Spleen (tissue), 13 donors: ENCODE measurements at regions of chr3 and their contacts with region 1.

Region 1: DNA sequence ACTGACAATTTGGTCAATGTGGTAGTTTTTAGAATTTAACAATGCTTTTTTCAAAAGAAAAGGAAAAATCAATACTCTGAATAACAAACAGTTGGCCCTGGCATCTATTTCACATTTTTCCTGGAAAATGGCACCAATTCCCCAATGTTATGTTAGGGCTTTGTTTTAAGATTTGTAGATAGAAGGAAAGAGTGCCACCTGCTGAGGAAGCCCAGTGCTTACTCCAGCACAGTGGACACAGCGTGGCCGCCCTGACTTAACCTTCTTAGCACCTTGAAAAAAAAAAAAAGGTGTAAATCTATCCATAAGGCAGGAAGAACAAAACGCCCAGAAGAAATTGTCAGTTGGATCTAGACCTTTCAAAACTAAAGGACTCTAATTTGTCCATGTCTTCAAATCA is 110.7 kb upstream of the CNTN4 start:
- DNase-seq: no peak
- H3K4me3 ChIP-seq: no peak overlapping the region
- H3K27ac ChIP-seq: no peak overlapping the region
- H3K4me1 ChIP-seq: no peaks in the 10 kb centered on the region
- H3K27me3 ChIP-seq: no peaks in the 10 kb centered on the region
- CTCF ChIP-seq: peak in 4 of 11 experiments; percentile 14 to 30 (median 17)
- POLR2A ChIP-seq: no peak

Region 2: GRCh38 chr3:1082108-1082507 is 905.9 kb before region 1 on chr3:
- intact Hi-C with region 1: loop called (anchors 10 kb)
- DNase-seq: no peak
- H3K4me3 ChIP-seq: no peak overlapping the region
- H3K27ac ChIP-seq: no peak overlapping the region
- H3K4me1 ChIP-seq: no peaks in the 10 kb centered on the region
- H3K27me3 ChIP-seq: no peaks in the 10 kb centered on the region
- CTCF ChIP-seq: peak in 8 of 11 experiments; percentile 18 to 50 (median 45)
- POLR2A ChIP-seq: no peak

Region 3: DNA sequence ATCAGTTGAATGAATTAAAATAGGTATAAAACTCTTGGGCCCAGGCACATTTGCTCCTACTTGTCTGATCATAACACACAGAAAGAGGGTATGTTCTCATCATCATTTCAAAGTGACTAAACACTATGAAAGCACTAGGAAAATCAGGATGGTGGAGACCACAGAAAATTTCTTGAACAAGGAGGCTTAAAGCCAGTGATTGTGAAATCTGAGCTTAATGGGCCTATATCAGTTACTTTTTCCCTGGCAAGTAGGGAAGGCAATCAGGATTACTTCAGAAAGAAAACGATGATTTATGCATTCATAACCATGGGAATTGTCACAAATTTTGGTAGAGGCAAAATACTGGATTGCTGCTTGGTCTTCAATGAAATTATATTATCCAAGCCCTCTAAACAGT is 323.7 kb before region 1 on chr3:
- intact Hi-C with region 1: no loop called
- DNase-seq: no peak
- H3K4me3 ChIP-seq: no peak overlapping the region
- H3K27ac ChIP-seq: no peak overlapping the region
- H3K4me1 ChIP-seq: no peaks in the 10 kb centered on the region
- H3K27me3 ChIP-seq: no peaks in the 10 kb centered on the region
- CTCF ChIP-seq: no peak
- POLR2A ChIP-seq: no peak

Region 4: GRCh38 chr3:1726741-1727140 is 261.2 kb before region 1 on chr3:
- intact Hi-C with region 1: no loop called
- DNase-seq: no peak
- H3K4me3 ChIP-seq: no peak overlapping the region
- H3K27ac ChIP-seq: no peak overlapping the region
- H3K4me1 ChIP-seq: no peaks in the 10 kb centered on the region
- H3K27me3 ChIP-seq: no peaks in the 10 kb centered on the region
- CTCF ChIP-seq: no peak
- POLR2A ChIP-seq: no peak

Region 5: GRCh38 chr3:1908651-1909445 is 79.1 kb before region 1 on chr3:
- intact Hi-C with region 1: no loop called
- DNase-seq: no peak
- H3K4me3 ChIP-seq: no peak overlapping the region
- H3K27ac ChIP-seq: no peak overlapping the region
- H3K4me1 ChIP-seq: no peaks in the 10 kb centered on the region
- H3K27me3 ChIP-seq: no peaks in the 10 kb centered on the region
- CTCF ChIP-seq: no peak
- POLR2A ChIP-seq: no peak

Region 6: GRCh38 chr3:2526926-2527325 is 538.9 kb after region 1 on chr3:
- intact Hi-C with region 1: no loop called
- DNase-seq: no peak
- H3K4me3 ChIP-seq: no peak overlapping the region
- H3K27ac ChIP-seq: no peak overlapping the region
- H3K4me1 ChIP-seq: no peaks in the 10 kb centered on the region
- H3K27me3 ChIP-seq: no peaks in the 10 kb centered on the region
- CTCF ChIP-seq: no peak
- POLR2A ChIP-seq: no peak